PC-9 (cell line): ENCODE measurements at regions of chr2 and their contacts with region 1.

Region 1: GRCh38 chr2:229650901-229651300 is 63.5 kb downstream of the DNER start:
- DNase-seq: no peak
- H3K4me3 ChIP-seq: no peak overlapping the region
- H3K27ac ChIP-seq: no peak overlapping the region
- H3K4me1 ChIP-seq: no peaks in the 10 kb centered on the region
- H3K27me3 ChIP-seq: no peaks in the 10 kb centered on the region
- CTCF ChIP-seq: no peak

Region 2: DNA sequence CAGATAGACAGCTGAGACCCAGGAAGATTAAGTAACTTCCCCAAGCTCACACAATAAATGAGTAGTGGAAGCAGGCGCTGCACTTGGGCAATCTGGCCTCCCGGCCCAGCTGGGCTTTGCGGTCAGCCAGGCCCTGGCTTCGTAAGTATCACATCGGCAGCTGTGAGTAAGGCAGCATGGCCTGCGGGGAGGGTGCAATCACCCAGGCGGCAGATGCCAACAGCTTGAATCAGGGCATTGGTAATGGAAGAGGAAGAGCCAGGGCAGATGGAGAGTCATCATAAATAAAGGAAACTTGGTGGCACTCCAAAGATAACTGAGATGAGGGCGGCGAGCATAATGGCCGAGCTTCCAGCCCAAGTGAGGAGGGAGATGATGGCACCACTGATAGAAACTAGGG is 161.9 kb before region 1 on chr2:
- CTCF ChIA-PET with region 1: interaction called, 20 read pairs
- POLR2A ChIA-PET with region 1: no interaction called
- intact Hi-C with region 1: no loop called
- DNase-seq: peak; percentile 83 to 98
- H3K4me3 ChIP-seq: peak overlapping the region; percentile 31; the same call in 1 of the 2 replicates
- H3K27ac ChIP-seq: no peak overlapping the region
- H3K4me1 ChIP-seq: peaks cover 17% of the 10 kb centered on the region
- H3K27me3 ChIP-seq: no peaks in the 10 kb centered on the region
- CTCF ChIP-seq: no peak

Region 3: GRCh38 chr2:229627728-229628127 is 23.2 kb before region 1 on chr2:
- CTCF ChIA-PET with region 1: no interaction called
- POLR2A ChIA-PET with region 1: no interaction called
- intact Hi-C with region 1: no loop called
- DNase-seq: no peak
- H3K4me3 ChIP-seq: no peak overlapping the region
- H3K27ac ChIP-seq: no peak overlapping the region
- H3K4me1 ChIP-seq: no peaks in the 10 kb centered on the region
- H3K27me3 ChIP-seq: no peaks in the 10 kb centered on the region
- CTCF ChIP-seq: no peak

Region 4: DNA sequence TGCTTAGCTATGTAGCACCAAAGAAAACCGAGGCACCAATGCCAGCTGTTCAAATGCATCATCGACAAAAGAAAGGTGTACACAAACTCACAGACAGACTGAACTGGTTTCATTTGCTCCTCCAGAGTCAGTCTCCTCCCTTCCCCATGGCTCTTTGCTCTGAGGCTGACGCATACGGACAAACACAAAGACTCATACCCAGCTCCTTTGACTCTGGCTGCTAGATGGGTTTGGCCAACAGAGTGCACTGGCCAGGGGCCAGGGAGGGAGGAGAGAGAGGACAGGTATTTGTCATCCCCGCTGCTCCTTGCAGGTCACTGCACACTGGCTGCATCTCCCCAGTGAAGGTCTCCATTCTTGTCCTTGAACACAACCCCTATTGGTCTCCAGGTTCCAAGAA is 22.8 kb after region 1 on chr2:
- CTCF ChIA-PET with region 1: no interaction called
- POLR2A ChIA-PET with region 1: no interaction called
- intact Hi-C with region 1: no loop called
- DNase-seq: peak; percentile 48 to 57
- H3K4me3 ChIP-seq: no peak overlapping the region
- H3K27ac ChIP-seq: no peak overlapping the region
- H3K4me1 ChIP-seq: no peaks in the 10 kb centered on the region
- H3K27me3 ChIP-seq: no peaks in the 10 kb centered on the region
- CTCF ChIP-seq: no peak